ENCODE measurements at regions of chr19 and their contacts with region 1.

Region 1: DNA sequence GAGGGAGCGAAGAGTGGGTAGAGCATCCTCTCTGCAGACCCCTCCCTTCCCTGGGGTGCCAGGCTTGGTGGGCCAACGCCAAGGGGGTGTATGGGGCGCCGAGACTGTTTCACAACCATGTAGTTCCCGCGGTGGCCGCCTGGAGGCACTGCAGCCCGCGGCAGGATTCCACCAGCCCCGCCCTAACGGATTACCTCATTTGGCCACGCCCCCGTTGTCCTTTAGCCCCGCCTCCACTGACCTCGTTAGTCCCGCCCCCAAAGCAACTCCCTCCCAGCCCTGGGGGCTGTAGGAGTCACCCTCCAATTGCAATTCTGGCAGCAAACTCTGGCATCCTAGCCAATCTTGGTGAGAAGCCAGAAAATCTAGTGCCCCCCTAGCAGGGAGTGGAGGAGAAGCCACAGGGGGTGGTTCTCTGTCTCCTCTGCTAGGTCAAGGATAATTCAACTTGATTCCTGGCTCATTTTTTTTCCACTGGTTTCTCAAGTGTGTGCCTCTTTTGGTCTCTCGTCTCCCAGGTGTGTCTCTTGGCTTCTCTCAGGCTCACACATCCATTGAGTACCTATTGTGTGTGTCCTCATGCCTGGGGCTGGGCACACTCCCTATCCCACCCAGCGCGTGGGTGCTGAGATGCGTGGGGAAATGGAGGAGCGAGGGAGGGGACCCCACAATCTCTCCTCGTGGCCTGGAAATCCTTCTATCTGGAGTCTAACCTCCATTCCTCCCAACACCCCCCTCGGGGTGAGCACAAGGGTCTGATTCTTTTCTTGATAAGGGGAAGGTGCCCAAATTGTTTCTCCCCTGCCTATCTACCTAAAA is 2.0 kb downstream of the OLFM2 start:
- DNase-seq: peak; percentile 69
- H3K4me3 Mint-ChIP-seq: no peak overlapping the region
- H3K27ac Mint-ChIP-seq: no peak overlapping the region
- H3K4me1 Mint-ChIP-seq: peaks cover 26% of the 10 kb centered on the region
- H3K27me3 Mint-ChIP-seq: peaks cover 48% of the 10 kb centered on the region

Region 2: GRCh38 chr19:9808855-9809824 is 125.2 kb before region 1 on chr19:
- intact Hi-C with region 1: no loop called
- DNase-seq: no peak
- H3K4me3 Mint-ChIP-seq: no peak overlapping the region
- H3K27ac Mint-ChIP-seq: peak overlapping the region; percentile 1
- H3K4me1 Mint-ChIP-seq: peaks cover 10% of the 10 kb centered on the region
- H3K27me3 Mint-ChIP-seq: no peaks in the 10 kb centered on the region

Region 3: DNA sequence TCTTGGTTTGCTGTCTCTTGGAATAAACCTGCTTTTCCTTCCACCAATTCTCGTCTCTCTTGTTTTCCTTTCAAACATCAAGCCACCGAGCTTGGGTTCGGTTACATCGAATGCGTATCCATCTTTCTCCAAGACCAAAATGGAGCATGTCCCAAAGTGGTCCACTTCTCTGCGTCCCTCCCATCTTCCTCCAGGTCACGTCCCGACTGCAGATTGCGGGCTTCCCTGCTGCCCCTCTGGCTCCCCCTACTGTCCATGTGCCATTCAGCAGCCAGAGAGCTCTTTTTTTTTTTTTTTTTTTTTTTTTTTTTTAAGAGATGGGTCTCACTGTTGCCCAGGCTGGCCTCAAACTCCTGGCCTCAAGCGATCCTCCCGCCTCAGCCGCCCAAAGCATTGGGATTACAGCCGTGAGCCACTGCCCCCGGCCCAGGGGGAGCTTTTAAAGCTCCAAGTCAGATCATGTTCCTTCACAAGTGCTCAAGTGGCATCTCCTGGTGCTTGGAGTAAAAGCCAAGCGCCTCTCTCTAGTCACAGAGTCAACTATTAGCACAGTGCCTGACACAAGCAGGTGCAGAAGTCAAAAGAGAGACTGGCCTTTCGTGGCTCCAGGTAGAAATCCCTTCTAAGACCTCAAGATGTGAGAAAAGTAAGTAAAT is 66.0 kb after region 1 on chr19:
- intact Hi-C with region 1: loop called (anchors 1 kb)
- DNase-seq: peak; percentile 43
- H3K4me3 Mint-ChIP-seq: no peak overlapping the region
- H3K27ac Mint-ChIP-seq: no peak overlapping the region
- H3K4me1 Mint-ChIP-seq: peaks cover 5% of the 10 kb centered on the region
- H3K27me3 Mint-ChIP-seq: peaks cover 12% of the 10 kb centered on the region

Region 4: DNA sequence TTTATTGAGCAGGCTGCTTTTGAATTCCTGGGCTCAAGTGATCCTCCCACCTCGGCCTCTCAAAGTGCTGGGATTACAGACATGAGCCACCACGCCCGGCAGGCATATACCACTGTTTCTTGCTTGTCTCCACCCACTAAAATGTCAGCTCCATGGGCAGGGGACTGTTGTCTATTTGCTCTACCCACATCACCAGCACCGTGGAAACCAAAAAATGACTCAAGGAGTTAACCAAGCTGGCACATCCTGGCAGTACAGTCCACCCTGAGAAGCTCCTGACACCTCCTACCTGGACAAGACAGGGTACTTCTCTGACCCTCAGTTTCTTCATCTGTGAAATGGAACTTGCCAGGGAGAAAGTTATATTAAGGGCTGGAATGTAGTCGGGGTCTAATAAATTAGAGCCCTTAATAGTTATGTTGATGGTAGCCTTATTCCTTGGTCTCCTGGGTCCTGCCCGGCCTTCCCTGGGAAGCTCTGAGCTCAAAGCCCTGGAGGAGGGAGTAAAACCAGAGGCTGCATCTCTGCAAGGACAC is 92.9 kb after region 1 on chr19:
- intact Hi-C with region 1: loop called (anchors 1 kb)
- DNase-seq: no peak
- H3K4me3 Mint-ChIP-seq: no peak overlapping the region
- H3K27ac Mint-ChIP-seq: no peak overlapping the region
- H3K4me1 Mint-ChIP-seq: no peaks in the 10 kb centered on the region
- H3K27me3 Mint-ChIP-seq: peaks cover 16% of the 10 kb centered on the region

Region 5: GRCh38 chr19:10112895-10113591 is 178.7 kb after region 1 on chr19:
- intact Hi-C with region 1: loop called (anchors 2 kb)
- DNase-seq: peak; percentile 41
- H3K4me3 Mint-ChIP-seq: peak overlapping the region; percentile 70
- H3K27ac Mint-ChIP-seq: peak overlapping the region; percentile 90
- H3K4me1 Mint-ChIP-seq: peaks cover 28% of the 10 kb centered on the region
- H3K27me3 Mint-ChIP-seq: no peaks in the 10 kb centered on the region

Measured in activated T-helper 1 cell treated with anti-CD3 and anti-CD28 coated beads, Interleukin-12 subunit alpha, Interleukin-12 subunit beta, Interleukin-2, Interleukin-4 antibody, amounts not matched to agents 30 ng/mL and 10 ng/mL and 1 ng/mL, durations not matched to agents 14 hours and 24 hours and 36 hours (primary cell).